ENCODE measurements at regions of chr11 and their contacts with region 1.

Region 1: GRCh38 chr11:13676576-13676975 is 8.1 kb downstream of the FAR1 start:
- DNase-seq: no peak
- H3K4me3 ChIP-seq: no peak overlapping the region
- H3K27ac ChIP-seq: no peak overlapping the region
- H3K4me1 ChIP-seq: peaks cover 13% of the 10 kb centered on the region
- H3K27me3 ChIP-seq: no peaks in the 10 kb centered on the region
- CTCF ChIP-seq: no peak
- POLR2A ChIP-seq: no peak

Region 2: DNA sequence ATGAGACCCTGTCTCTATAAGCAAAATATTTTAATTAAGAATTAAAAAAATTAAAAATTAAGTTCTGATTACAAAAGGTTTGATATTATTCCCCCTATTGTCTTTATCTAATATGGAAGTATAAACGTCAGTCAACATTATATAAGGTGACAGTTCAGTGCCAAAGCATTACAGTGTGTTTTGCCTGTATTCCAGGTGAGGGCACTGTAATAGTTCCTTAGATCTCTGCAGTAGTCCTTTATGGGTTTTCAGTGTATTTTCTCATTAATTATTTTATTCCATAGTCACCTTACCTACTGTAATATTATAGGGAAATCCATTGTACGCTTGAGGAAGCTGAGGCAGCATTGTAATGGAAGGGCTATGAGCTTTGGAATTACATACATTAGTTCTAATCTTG is 24.9 kb after region 1 on chr11:
- CTCF ChIA-PET with region 1: no interaction called
- POLR2A ChIA-PET with region 1: no interaction called
- dilution Hi-C with region 1: no loop called
- intact Hi-C with region 1: loop called (anchors 2 kb)
- DNase-seq: no peak
- H3K4me3 ChIP-seq: no peak overlapping the region
- H3K27ac ChIP-seq: no peak overlapping the region
- H3K4me1 ChIP-seq: peaks cover 11% of the 10 kb centered on the region
- H3K27me3 ChIP-seq: no peaks in the 10 kb centered on the region
- CTCF ChIP-seq: no peak
- POLR2A ChIP-seq: no peak

Measured in endothelial cell of umbilical vein (primary cell).